Naive thymus-derived CD4-positive, alpha-beta T cell (primary cell): ENCODE measurements at regions of chr1 and their contacts with region 1.

Region 1: GRCh38 chr1:205591522-205592351 is 40.1 kb downstream of the ELK4 start:
- DNase-seq: peak; percentile 86 to 94 (median 91)
- ATAC-seq: peak; percentile 95
- H3K4me3 ChIP-seq: peak overlapping the region; percentile 55
- H3K4me3 Mint-ChIP-seq: peak overlapping the region; percentile 77 to 97 (median 91)
- H3K27ac ChIP-seq: peak overlapping the region; percentile 85
- H3K27ac Mint-ChIP-seq: peak overlapping the region; percentile 88 to 97 (median 95)
- H3K4me1 ChIP-seq: peaks cover 8 to 32% of the 10 kb centered on the region in 2 donors
- H3K4me1 Mint-ChIP-seq: peaks cover 19 to 65% (median 61%) of the 10 kb centered on the region in 7 donors
- H3K27me3 ChIP-seq: no peaks in the 10 kb centered on the region
- H3K27me3 Mint-ChIP-seq: peaks cover 0 to 4% (median 0%) of the 10 kb centered on the region in 5 donors

Region 2: GRCh38 chr1:205300886-205301821 is 290.6 kb before region 1 on chr1:
- CTCF ChIA-PET with region 1: no interaction called
- POLR2A ChIA-PET with region 1: no interaction called
- intact Hi-C with region 1: no loop called
- DNase-seq: no peak
- ATAC-seq: no peak
- H3K4me3 ChIP-seq: no peak overlapping the region
- H3K4me3 Mint-ChIP-seq: no peak overlapping the region
- H3K27ac ChIP-seq: no peak overlapping the region
- H3K27ac Mint-ChIP-seq: peak overlapping the region in 8 of 9 donors; percentile 25 to 84 (median 75)
- H3K4me1 ChIP-seq: peaks cover 3 to 7% of the 10 kb centered on the region in 2 donors
- H3K4me1 Mint-ChIP-seq: peaks cover 30 to 73% (median 57%) of the 10 kb centered on the region in 7 donors
- H3K27me3 ChIP-seq: no peaks in the 10 kb centered on the region
- H3K27me3 Mint-ChIP-seq: peaks cover 0 to 2% (median 0%) of the 10 kb centered on the region in 5 donors

Region 3: GRCh38 chr1:205523891-205524793 is 67.6 kb before region 1 on chr1:
- CTCF ChIA-PET with region 1: interaction called, 16 read pairs
- POLR2A ChIA-PET with region 1: no interaction called
- intact Hi-C with region 1: loop called (anchors 1 to 2 kb)
- DNase-seq: peak; percentile 42 to 69 (median 62)
- ATAC-seq: peak; percentile 60
- H3K4me3 ChIP-seq: no peak overlapping the region
- H3K4me3 Mint-ChIP-seq: no peak overlapping the region
- H3K27ac ChIP-seq: no peak overlapping the region
- H3K27ac Mint-ChIP-seq: no peak overlapping the region
- H3K4me1 ChIP-seq: no peaks in the 10 kb centered on the region
- H3K4me1 Mint-ChIP-seq: peaks cover 0 to 3% (median 0%) of the 10 kb centered on the region in 7 donors
- H3K27me3 ChIP-seq: no peaks in the 10 kb centered on the region
- H3K27me3 Mint-ChIP-seq: peaks cover 0 to 4% (median 0%) of the 10 kb centered on the region in 5 donors

Region 4: DNA sequence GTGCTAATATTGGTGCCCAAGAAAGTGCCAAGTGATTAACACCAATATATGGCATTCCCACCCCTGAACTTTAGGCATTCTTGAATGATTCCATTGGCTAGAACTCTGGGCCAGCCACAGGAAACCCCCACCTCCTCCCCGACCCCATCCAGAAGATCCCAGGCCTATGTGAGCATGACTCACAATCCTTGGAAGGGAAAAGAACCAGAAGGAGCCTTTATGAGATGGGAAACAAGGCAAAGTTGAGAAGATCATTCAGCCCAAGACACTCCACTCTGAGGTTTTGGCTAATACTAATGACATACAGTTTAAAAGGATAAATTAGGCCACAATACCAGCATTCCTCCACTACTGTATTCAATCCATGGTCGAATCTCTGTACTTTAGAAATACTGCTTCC is 18.3 kb after region 1 on chr1:
- CTCF ChIA-PET with region 1: interaction called, 17 read pairs
- POLR2A ChIA-PET with region 1: interaction called, 5 read pairs
- intact Hi-C with region 1: loop called (anchors 2 kb)
- DNase-seq: no peak
- ATAC-seq: no peak
- H3K4me3 ChIP-seq: no peak overlapping the region
- H3K4me3 Mint-ChIP-seq: peak overlapping the region in 1 of 10 donors; percentile 50
- H3K27ac ChIP-seq: no peak overlapping the region
- H3K27ac Mint-ChIP-seq: peak overlapping the region in 6 of 9 donors; percentile 12 to 87 (median 52)
- H3K4me1 ChIP-seq: peaks cover 12 to 22% of the 10 kb centered on the region in 2 donors
- H3K4me1 Mint-ChIP-seq: peaks cover 20 to 71% (median 57%) of the 10 kb centered on the region in 7 donors
- H3K27me3 ChIP-seq: no peaks in the 10 kb centered on the region
- H3K27me3 Mint-ChIP-seq: no peaks in the 10 kb centered on the region

Region 5: DNA sequence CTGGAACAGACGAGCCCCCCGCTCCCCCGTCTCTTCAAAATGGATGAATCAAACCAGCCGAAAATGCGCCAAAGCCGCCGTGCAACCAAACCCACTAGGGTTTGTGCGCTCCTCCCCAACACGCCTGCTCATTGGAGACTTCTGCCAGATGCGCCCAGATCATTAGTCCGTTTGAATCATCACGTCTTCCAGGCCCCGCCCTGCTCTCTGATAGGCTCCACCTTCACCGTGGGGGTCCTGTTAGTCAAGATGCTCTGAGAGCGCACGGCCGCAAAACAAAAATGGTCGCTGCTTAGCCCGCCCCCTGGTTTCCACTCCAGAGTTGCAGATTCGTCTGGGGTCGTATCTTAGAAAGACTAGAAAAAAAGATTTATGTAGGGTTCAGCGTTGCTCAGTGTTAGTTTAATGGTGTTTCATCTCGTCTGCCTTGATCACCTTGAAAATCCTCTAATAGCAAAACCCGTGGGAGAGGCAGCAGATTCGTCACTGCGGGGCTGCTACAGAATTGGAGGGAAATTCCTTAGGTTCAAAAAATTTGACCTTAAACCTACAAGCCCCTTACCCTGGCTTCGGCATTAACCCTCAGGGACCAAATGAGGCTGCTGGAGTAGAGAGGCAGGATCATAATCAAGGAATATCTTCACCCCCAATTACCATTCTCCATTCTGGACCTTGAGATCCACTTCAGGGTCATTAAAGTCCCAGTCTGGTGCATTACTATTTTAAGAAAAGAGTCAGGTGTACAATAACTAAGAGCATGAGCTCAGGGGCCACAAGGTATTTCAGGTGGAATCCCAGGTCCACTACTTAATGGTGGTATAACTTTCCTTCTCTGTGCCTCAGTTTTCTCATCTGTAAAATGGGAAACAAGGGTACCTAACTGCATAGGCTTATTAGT is 158.7 kb after region 1 on chr1 and contains the start of gene NUCKS1:
- CTCF ChIA-PET with region 1: no interaction called
- POLR2A ChIA-PET with region 1: interaction called, 6 read pairs
- intact Hi-C with region 1: loop called in 1 of 2 experiments (anchors 1 kb)
- DNase-seq: peak; percentile 79 to 99 (median 97)
- ATAC-seq: peak; percentile 86
- H3K4me3 ChIP-seq: peak within 1 kb of the TSS; percentile 81
- H3K4me3 Mint-ChIP-seq: peak within 1 kb of the TSS; percentile 83 to 99 (median 96)
- H3K27ac ChIP-seq: peak within 1 kb of the TSS; percentile 95
- H3K27ac Mint-ChIP-seq: peak within 1 kb of the TSS; percentile 96 to 100 (median 98)
- H3K4me1 ChIP-seq: peaks cover 6 to 10% of the 10 kb centered on the region in 2 donors
- H3K4me1 Mint-ChIP-seq: peaks cover 24 to 49% (median 39%) of the 10 kb centered on the region in 7 donors
- H3K27me3 ChIP-seq: no peaks in the 10 kb centered on the region
- H3K27me3 Mint-ChIP-seq: peaks cover 0 to 3% (median 0%) of the 10 kb centered on the region in 5 donors
- total RNA-seq, gene NUCKS1: 70.4 to 164 (median 122) TPM

Region 6: GRCh38 chr1:206117151-206117948 is 525.6 kb after region 1 on chr1 and contains the start of gene AVPR1B:
- CTCF ChIA-PET with region 1: no interaction called
- POLR2A ChIA-PET with region 1: no interaction called
- intact Hi-C with region 1: no loop called
- DNase-seq: peak in 1 of 9 donors; percentile 28
- ATAC-seq: peak; percentile 29
- H3K4me3 ChIP-seq: no peak within 1 kb of the TSS
- H3K4me3 Mint-ChIP-seq: peak within 1 kb of the TSS; percentile 20 to 83 (median 57)
- H3K27ac ChIP-seq: no peak within 1 kb of the TSS
- H3K27ac Mint-ChIP-seq: no peak within 1 kb of the TSS
- H3K4me1 ChIP-seq: no peaks in the 10 kb centered on the region
- H3K4me1 Mint-ChIP-seq: peaks cover 7 to 11% (median 9%) of the 10 kb centered on the region in 7 donors
- H3K27me3 ChIP-seq: no peaks in the 10 kb centered on the region
- H3K27me3 Mint-ChIP-seq: peaks cover 45 to 81% (median 52%) of the 10 kb centered on the region in 5 donors
- total RNA-seq, gene AVPR1B: 0.27 TPM in 1 of 5 experiments, not detected in the others